Natural killer cell (primary cell): ENCODE measurements at regions of chr1 and their contacts with region 1.

Region 1: GRCh38 chr1:24502709-24503058 is at the start of gene RCAN3:
- DNase-seq: peak; percentile 46 to 94
- ATAC-seq: peak; percentile 65 to 85 (median 67)
- H3K4me3 ChIP-seq: peak within 1 kb of the TSS; percentile 78
- H3K4me3 Mint-ChIP-seq: peak within 1 kb of the TSS; percentile 92
- H3K27ac ChIP-seq: peak within 1 kb of the TSS; percentile 89
- H3K27ac Mint-ChIP-seq: peak within 1 kb of the TSS; percentile 52 to 69
- H3K4me1 ChIP-seq: peaks cover 44% of the 10 kb centered on the region
- H3K4me1 Mint-ChIP-seq: peaks cover 36 to 45% of the 10 kb centered on the region in 2 donors
- H3K27me3 ChIP-seq: peaks cover 17% of the 10 kb centered on the region
- H3K27me3 Mint-ChIP-seq: peaks cover 73 to 77% of the 10 kb centered on the region in 2 donors
- CTCF ChIP-seq: no peak
- total RNA-seq, gene RCAN3: 4.5 to 8.1 (median 7.9) TPM

Region 2: DNA sequence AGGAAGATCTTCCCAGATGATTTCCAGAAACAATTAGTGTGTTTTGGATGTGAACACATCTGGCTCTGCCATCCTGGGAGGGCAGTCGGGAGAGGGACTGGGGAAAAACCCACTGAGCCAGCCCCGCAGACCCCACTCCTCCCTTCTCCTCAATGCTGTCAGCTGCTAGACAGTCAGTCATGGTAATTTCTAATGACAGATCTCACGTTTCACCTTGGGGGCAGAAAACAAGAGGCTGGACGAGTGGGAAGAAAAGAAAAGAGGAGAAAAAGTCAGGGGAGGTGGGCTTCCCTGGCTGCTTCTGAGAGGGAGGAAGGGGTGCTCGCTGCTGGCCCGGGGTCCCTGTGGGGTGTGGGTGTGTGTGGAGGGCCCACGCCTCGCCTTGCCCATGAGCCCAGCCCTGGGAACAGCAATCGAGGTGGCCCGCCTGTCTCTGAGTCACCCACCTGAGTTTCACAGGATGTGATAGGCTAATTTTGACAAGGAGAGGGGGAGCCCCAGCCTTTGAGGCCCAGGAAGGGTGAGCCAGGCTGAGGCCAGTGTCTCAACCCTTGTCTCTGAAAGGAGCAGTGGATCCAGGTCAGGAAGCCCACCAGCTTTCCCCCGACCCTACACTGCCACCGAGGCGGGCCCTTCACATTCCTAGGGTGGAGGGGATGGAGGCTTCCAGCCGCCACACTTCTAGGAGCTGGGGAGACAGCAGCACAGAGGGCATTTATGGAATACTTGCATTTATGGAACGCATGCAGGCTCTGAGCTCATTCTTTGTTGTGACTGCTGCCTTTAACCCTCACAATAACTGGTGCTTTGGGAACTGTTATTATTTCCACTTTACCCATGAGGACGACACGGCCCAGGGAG is 266.5 kb before region 1 on chr1:
- intact Hi-C with region 1: no loop called
- DNase-seq: no peak
- ATAC-seq: no peak
- H3K4me3 ChIP-seq: no peak overlapping the region
- H3K4me3 Mint-ChIP-seq: no peak overlapping the region
- H3K27ac ChIP-seq: no peak overlapping the region
- H3K27ac Mint-ChIP-seq: no peak overlapping the region
- H3K4me1 ChIP-seq: no peaks in the 10 kb centered on the region
- H3K4me1 Mint-ChIP-seq: no peaks in the 10 kb centered on the region
- H3K27me3 ChIP-seq: no peaks in the 10 kb centered on the region
- H3K27me3 Mint-ChIP-seq: peaks cover 8 to 22% of the 10 kb centered on the region in 2 donors
- CTCF ChIP-seq: no peak

Region 3: DNA sequence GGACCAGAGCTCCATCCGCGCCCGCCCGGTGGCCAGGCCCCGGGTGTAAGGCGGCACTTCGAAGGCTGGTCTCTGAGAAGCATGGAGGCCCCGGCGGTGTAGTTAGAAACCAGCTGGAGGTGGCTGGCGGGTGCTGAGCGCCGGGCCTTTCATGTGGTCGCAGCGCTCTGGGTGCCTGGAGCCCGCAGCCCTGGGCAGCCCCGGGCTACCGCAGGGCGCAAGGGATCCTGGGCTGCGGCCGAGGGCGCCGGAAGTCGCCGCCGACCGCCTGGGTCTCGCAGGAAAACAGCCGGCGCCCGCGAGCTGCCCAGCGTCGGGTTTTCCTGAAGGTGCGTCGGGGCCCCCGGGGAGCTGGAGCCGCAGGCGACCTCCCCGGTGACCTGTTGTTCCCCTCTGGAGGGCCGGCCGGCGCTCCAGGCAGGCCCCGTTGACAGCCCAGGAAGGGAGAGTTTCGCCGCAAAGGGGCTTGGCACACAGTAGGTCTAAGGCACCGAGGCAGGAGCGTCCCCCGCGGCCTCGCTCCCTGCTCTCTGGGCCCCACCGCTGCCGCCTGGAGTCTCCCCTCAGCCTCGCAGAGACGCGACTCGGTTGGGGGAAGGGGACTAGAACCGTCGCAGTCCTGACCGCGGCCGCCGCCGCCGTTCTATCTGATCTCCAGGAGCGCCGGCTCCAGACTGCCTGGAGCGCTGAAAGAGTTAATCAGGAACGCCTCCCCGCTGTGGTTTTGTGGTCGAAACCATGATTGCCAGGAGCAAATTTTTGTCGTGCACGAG is 180.8 kb before region 1 on chr1:
- intact Hi-C with region 1: no loop called
- DNase-seq: peak; percentile 68 to 82
- ATAC-seq: peak; percentile 75 to 91 (median 83)
- H3K4me3 ChIP-seq: peak overlapping the region; percentile 39
- H3K4me3 Mint-ChIP-seq: peak overlapping the region; percentile 84
- H3K27ac ChIP-seq: no peak overlapping the region
- H3K27ac Mint-ChIP-seq: peak overlapping the region; percentile 53 to 85
- H3K4me1 ChIP-seq: peaks cover 40% of the 10 kb centered on the region
- H3K4me1 Mint-ChIP-seq: peaks cover 34 to 41% of the 10 kb centered on the region in 2 donors
- H3K27me3 ChIP-seq: peaks cover 54% of the 10 kb centered on the region
- H3K27me3 Mint-ChIP-seq: peaks cover 61 to 62% of the 10 kb centered on the region in 2 donors
- CTCF ChIP-seq: no peak

Region 4: DNA sequence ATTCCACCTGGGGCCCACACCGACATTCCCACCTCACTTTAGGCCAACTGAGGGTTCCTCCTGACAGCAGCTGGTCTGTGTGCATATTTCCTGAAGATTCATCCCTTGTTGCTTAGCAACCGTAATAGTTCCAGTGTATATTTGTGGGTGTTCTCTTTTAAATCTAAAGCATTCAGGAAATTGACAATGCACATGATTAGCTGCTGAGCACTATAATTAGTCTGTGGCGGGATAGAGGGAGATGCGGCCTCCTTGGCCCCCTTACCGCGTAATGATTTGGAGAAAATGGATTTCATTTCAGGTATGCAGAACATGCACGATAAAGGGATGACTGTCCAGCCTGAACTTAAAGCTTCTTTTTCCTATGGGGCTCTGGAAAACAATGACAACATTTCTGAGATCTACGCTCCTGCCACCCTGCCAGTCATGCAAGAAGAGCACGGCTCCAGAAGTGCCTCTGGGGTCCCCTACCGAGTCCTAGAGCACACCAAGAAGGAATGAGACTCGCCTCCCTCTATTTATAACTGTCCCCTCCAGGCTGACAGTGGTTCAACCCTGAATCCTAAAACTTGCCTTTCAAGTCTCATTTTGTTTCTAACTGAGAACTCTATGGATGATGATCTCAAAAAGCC is 33.9 kb before region 1 on chr1:
- intact Hi-C with region 1: no loop called
- DNase-seq: no peak
- ATAC-seq: no peak
- H3K4me3 ChIP-seq: no peak overlapping the region
- H3K4me3 Mint-ChIP-seq: no peak overlapping the region
- H3K27ac ChIP-seq: no peak overlapping the region
- H3K27ac Mint-ChIP-seq: no peak overlapping the region
- H3K4me1 ChIP-seq: no peaks in the 10 kb centered on the region
- H3K4me1 Mint-ChIP-seq: peaks cover 0 to 4% of the 10 kb centered on the region in 2 donors
- H3K27me3 ChIP-seq: no peaks in the 10 kb centered on the region
- H3K27me3 Mint-ChIP-seq: no peaks in the 10 kb centered on the region
- CTCF ChIP-seq: no peak

Region 5: DNA sequence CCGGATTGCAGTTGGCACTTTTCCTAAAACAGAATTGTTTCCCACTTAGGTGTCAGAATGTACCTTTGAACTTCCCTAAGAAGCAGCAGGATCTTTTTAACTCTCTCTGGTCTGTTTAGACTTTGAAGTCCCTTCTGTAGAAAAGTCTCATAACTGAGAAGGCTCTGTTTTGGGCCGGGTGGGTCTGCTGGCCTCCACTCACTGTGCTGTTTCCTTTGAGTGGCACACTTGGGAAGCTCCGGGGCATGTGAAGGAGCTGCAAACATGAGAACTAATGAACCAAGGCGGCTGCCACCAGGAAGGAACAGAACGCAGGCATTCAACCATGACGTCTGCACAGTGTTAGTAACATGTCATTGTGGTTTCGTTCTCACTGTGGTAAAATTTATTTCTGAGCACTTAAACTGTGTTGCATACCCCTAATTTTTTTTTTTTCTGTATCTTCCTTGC is 33.7 kb after region 1 on chr1:
- intact Hi-C with region 1: loop called (anchors 5 kb)
- DNase-seq: peak; percentile 56 to 94
- ATAC-seq: peak; percentile 74 to 89 (median 75)
- H3K4me3 ChIP-seq: peak overlapping the region; percentile 1
- H3K4me3 Mint-ChIP-seq: peak overlapping the region; percentile 87
- H3K27ac ChIP-seq: peak overlapping the region; percentile 90
- H3K27ac Mint-ChIP-seq: peak overlapping the region; percentile 89 to 93
- H3K4me1 ChIP-seq: peaks cover 21% of the 10 kb centered on the region
- H3K4me1 Mint-ChIP-seq: peaks cover 24 to 25% of the 10 kb centered on the region in 2 donors
- H3K27me3 ChIP-seq: no peaks in the 10 kb centered on the region
- H3K27me3 Mint-ChIP-seq: peaks cover 3 to 16% of the 10 kb centered on the region in 2 donors
- CTCF ChIP-seq: no peak